Breast epithelium (tissue), 4 donors: ENCODE measurements at regions of chr2 and their contacts with region 1.

Region 1: DNA sequence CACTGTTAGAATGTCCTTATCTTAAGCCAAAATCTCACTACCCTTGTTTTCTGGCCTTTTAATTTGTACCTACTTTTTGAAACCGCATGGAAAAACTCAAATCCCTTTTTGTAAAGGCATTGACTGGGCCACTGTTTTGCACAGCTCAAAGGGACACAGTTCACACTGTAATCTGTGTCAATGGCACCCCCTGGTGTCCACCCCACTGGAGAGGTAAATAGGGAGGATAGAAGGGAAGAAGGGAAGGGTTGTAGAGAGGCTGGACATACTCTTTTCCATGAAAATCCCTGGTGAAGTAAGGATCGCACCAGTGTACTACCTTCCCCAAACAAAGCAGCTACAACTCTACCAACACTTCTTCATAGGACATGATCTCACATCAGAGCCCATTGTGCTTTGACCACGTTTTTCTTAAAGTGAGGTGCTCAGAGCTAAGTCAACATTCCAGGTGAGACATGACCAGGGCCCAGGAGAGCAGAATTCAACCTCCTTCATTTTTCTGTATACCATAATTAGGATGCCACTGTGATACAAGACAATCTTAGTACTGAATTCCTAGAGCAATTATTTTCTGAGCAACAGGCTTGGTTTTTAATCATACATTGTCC is 92.4 kb upstream of the RMDN2 start:
- DNase-seq: peak; percentile 82 to 88
- H3K4me3 ChIP-seq: no peak overlapping the region
- H3K27ac ChIP-seq: peak overlapping the region in 1 of 2 donors; percentile 4
- H3K4me1 ChIP-seq: no peaks in the 10 kb centered on the region
- H3K27me3 ChIP-seq: no peaks in the 10 kb centered on the region
- CTCF ChIP-seq: peak; percentile 77 to 92 (median 88)
- POLR2A ChIP-seq: no peak

Region 2: DNA sequence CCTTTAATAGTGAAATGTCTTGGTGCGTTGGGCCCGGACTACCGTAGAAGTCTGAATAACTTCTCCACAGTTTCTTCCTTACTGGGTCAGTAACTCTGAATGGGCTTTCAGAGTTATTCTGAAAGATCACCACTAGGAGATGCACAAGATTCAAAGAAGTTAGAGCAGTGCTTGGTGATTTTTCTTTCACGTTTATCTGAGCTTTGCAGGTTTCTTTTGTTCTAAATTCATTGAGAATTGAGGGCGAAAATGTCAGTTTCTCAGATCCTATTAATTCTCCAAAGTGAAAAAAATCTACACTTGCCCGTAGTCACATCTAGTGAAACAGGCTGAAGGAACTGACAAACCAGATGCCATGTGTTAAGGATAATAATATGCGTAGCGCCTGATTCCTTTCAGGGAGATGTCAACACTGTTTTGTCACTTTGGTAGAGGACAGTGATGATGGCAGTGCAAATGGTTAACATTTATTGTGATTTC is 418.2 kb before region 1 on chr2:
- intact Hi-C with region 1: loop called (anchors 10 kb)
- DNase-seq: no peak
- H3K4me3 ChIP-seq: no peak overlapping the region
- H3K27ac ChIP-seq: no peak overlapping the region
- H3K4me1 ChIP-seq: no peaks in the 10 kb centered on the region
- H3K27me3 ChIP-seq: no peaks in the 10 kb centered on the region
- CTCF ChIP-seq: peak; percentile 93 to 97 (median 97)
- POLR2A ChIP-seq: no peak

Region 3: DNA sequence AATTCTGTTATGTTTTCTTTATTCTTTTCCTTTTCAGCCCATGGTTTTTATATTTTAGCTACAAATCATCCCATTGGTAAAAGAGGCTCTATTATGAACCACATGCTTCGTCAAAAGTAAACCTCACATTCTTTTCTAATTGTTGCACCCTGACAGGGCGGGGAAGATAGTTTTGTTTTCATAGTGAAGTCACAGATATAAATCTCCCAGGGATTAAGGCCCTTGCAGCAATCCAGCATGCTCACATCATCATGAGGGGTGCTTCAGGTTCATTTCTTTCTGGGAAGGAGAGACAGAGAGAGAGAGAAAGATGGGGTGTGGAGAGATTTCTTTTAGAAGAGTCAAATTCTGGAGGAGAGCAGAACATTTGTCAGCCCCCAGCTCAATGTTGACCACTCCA is 36.8 kb before region 1 on chr2:
- intact Hi-C with region 1: no loop called
- DNase-seq: no peak
- H3K4me3 ChIP-seq: no peak overlapping the region
- H3K27ac ChIP-seq: no peak overlapping the region
- H3K4me1 ChIP-seq: no peaks in the 10 kb centered on the region
- H3K27me3 ChIP-seq: no peaks in the 10 kb centered on the region
- CTCF ChIP-seq: no peak
- POLR2A ChIP-seq: no peak